Prostate gland (tissue), 2 donors: ENCODE measurements at regions of chr9 and their contacts with region 1.

Region 1: GRCh38 chr9:132575005-132575609 is 7.3 kb upstream of the BARHL1 start:
- DNase-seq: peak; percentile 60
- H3K4me3 ChIP-seq: no peak overlapping the region
- H3K27ac ChIP-seq: no peak overlapping the region
- H3K4me1 ChIP-seq: no peaks in the 10 kb centered on the region
- H3K27me3 ChIP-seq: peaks cover 23% of the 10 kb centered on the region
- CTCF ChIP-seq: peak in 3 of 4 experiments; percentile 61 to 79 (median 75)
- POLR2A ChIP-seq: no peak

Region 2: GRCh38 chr9:132411091-132411508 is 164.0 kb before region 1 on chr9:
- intact Hi-C with region 1: loop called (anchors 2 kb)
- DNase-seq: peak; percentile 28
- H3K4me3 ChIP-seq: no peak overlapping the region
- H3K27ac ChIP-seq: no peak overlapping the region
- H3K4me1 ChIP-seq: no peaks in the 10 kb centered on the region
- H3K27me3 ChIP-seq: peaks cover 13% of the 10 kb centered on the region
- CTCF ChIP-seq: peak; percentile 22 to 70 (median 64)
- POLR2A ChIP-seq: no peak

Region 3: GRCh38 chr9:132507746-132508469 is 67.2 kb before region 1 on chr9:
- intact Hi-C with region 1: loop called (anchors 5 kb)
- DNase-seq: peak; percentile 65
- H3K4me3 ChIP-seq: no peak overlapping the region
- H3K27ac ChIP-seq: no peak overlapping the region
- H3K4me1 ChIP-seq: no peaks in the 10 kb centered on the region
- H3K27me3 ChIP-seq: no peaks in the 10 kb centered on the region
- CTCF ChIP-seq: peak; percentile 70 to 84 (median 78)
- POLR2A ChIP-seq: no peak

Region 4: GRCh38 chr9:132610661-132611060 is 35.6 kb after region 1 on chr9:
- intact Hi-C with region 1: no loop called
- DNase-seq: no peak
- H3K4me3 ChIP-seq: no peak overlapping the region
- H3K27ac ChIP-seq: no peak overlapping the region
- H3K4me1 ChIP-seq: no peaks in the 10 kb centered on the region
- H3K27me3 ChIP-seq: no peaks in the 10 kb centered on the region
- CTCF ChIP-seq: no peak
- POLR2A ChIP-seq: no peak

Region 5: DNA sequence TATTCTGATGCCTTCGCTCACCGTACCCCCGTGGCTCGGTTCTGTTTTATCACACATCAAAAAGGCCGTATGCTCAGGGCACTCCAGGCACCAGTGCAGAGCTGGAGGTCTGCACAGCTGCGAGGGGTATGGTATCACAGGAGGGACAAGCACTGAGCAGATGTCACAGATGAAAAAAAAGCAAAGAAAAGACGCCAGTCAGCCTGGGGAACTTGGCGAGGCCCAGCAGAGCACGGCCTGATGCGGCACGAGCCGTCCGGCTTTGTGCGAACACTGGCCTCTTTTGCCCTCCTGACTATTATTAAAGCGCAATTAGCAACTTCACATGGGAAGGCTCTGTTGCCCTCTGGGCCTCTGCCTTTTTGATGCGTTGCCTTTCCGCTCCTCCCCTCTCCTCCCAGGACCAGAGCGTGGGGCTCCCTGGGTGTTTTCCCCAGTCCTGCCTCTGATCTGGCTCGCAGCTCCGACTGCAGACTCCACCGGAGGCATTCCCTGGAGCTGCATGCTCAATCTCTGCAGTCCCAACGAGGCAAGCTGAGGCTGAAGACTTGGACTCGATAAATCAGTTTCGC is 258.5 kb after region 1 on chr9:
- intact Hi-C with region 1: no loop called
- DNase-seq: no peak
- H3K4me3 ChIP-seq: no peak overlapping the region
- H3K27ac ChIP-seq: no peak overlapping the region
- H3K4me1 ChIP-seq: no peaks in the 10 kb centered on the region
- H3K27me3 ChIP-seq: no peaks in the 10 kb centered on the region
- CTCF ChIP-seq: no peak
- POLR2A ChIP-seq: no peak